H1 (cell line): ENCODE measurements at regions of chr2 and their contacts with region 1.

Region 1: DNA sequence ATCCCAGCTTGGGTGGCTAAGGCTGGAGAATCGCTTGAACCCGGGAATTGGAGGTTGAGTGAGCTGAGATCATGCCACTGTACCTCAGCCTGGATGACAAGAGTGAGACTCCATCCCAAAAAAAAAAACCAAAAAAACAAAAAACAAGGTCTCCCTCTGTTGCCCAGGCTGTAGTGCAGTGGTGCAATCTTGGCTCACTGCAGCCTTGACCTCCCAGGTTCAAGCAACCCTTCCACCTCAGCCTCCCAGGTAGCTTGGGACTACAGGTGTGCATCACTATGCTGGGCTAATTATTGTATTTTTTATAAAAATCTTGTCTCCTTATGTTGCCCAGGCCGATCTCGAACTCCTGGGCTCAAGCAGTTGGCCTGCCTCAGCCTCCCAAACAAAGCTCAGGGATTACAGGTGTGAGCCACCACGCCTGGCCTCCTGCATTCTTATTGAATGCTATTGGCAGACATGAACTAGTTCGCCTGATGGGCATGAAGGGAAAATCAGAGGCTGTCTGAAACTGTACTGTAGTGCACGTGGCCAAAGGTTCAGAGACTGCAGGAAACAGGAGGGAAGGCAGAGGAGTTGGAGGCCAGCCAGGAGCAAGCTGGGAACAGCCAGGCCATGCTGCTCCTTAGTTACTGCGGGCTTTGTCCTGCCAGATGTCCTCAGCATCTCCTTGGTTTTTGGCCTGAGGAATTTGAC is 16.0 kb upstream of the ASXL2 start:
- DNase-seq: no peak
- H3K4me3 ChIP-seq: no peak overlapping the region
- H3K27ac ChIP-seq: no peak overlapping the region
- H3K4me1 ChIP-seq: peaks cover 0 to 2% (median under 1%) of the 10 kb centered on the region in 4 experiments; a peak in 2 of 7 replicates
- H3K27me3 ChIP-seq: no peaks in the 10 kb centered on the region
- CTCF ChIP-seq: no peak
- EP300 ChIP-seq: no peak
- POLR2A ChIP-seq: no peak
- RAD21 ChIP-seq: no peak

Region 2: GRCh38 chr2:25878361-25879132 is 15.7 kb before region 1 on chr2 and contains the start of gene ASXL2:
- CTCF ChIA-PET with region 1: interaction called, 4 read pairs
- POLR2A ChIA-PET with region 1: interaction called, 14 read pairs
- DNase-seq: peak; percentile 94 to 95
- H3K4me3 ChIP-seq: peak within 1 kb of the TSS; percentile 93 to 100 (median 96)
- H3K27ac ChIP-seq: peak within 1 kb of the TSS; percentile 81
- H3K4me1 ChIP-seq: peaks cover 0 to 5% (median 4%) of the 10 kb centered on the region in 4 experiments; a peak in 4 of 7 replicates
- H3K27me3 ChIP-seq: no peaks in the 10 kb centered on the region
- CTCF ChIP-seq: no peak
- EP300 ChIP-seq: no peak
- POLR2A ChIP-seq: peak; percentile 59 to 63; a peak in 2 of 3 replicates
- RAD21 ChIP-seq: no peak; a peak in 1 of 4 replicates
- total RNA-seq, gene ASXL2: 41.3 and 42.8 TPM in 2 replicates